Transverse colon (tissue), 4 donors: ENCODE measurements at regions of chr15 and their contacts with region 1.

Region 1: DNA sequence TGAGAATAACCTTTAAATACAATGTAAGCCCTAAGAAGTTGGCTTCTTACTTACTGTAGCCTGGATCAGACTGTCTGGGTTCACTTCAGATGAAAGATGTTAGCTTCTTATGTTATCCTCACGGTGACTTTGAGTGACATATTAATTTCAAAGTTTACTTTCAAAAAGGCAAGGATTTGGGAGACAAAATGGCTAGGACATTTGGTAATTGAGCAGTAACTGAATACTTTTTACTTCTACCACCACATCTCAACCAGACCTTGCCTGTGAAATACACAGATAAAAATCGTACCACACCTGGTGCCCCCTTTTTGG is 36.0 kb upstream of the BNIP2 start:
- DNase-seq: no peak
- H3K4me3 ChIP-seq: no peak overlapping the region
- H3K27ac ChIP-seq: no peak overlapping the region
- H3K4me1 ChIP-seq: no peaks in the 10 kb centered on the region
- H3K27me3 ChIP-seq: peaks cover 13% of the 10 kb centered on the region
- CTCF ChIP-seq: no peak
- EP300 ChIP-seq: no peak
- POLR2A ChIP-seq: no peak

Region 2: DNA sequence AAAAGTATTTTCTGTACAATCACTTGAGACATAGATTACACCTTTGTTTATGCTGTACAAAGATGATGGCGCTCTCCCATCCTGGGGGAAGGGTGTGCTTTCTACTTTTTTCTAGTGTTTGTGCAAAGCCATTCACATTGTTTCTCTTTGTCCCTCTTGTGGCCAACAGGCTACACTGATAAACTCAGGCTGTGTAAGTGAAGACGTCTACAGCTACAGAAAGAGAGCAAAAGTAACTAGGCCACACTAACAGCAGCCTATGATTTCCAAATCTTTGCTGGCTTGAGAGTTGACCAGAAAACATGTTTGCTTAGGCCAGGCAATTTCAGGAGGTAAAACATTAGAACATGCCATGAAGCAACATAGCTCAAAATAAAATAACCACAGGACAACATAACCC is 354.1 kb after region 1 on chr15:
- in situ Hi-C with region 1: no loop called
- intact Hi-C with region 1: no loop called
- DNase-seq: no peak
- H3K4me3 ChIP-seq: no peak overlapping the region
- H3K27ac ChIP-seq: no peak overlapping the region
- H3K4me1 ChIP-seq: no peaks in the 10 kb centered on the region
- H3K27me3 ChIP-seq: peaks cover 3% of the 10 kb centered on the region
- CTCF ChIP-seq: no peak
- EP300 ChIP-seq: no peak
- POLR2A ChIP-seq: no peak

Region 3: DNA sequence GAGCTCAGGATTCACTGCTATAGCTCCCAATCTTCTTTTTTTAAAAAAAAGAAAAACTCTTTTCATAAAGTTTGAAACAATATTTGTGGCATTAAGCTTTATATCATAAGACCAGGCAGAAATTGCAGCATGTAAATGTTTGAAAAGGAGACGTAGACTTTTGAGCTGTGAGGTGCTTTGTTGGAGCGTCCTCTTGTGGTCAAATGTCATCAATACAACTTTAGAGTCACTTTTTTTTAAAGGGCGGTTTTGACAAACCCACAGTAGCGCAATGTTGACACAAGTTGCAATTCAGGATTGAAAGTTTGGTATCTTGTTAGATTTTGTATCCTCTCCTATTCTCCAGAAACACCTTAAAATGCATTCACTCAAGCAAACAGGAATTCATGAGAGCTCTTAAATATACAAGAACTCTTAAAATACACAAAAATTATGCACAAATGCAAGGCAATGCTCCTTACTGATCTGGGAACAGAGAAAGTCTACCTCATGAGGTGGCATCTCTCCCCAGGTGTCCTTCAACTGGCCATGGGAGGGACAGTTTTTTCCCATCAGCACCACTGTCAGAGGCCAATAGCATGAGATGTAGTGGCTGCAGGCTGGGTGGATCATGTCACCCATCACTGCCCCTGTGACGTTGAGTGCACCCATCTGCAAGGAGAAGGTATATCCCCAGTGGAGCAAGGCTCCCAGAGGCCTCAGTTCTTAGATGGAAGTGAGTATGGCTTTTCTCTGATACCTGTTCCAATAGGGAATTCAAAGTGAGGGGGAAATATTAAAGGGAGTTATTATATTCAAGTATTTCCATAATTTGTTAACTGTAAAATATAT is 601.9 kb after region 1 on chr15:
- in situ Hi-C with region 1: loop called in 2 of 4 experiments (anchors 10 kb)
- intact Hi-C with region 1: no loop called
- DNase-seq: no peak
- H3K4me3 ChIP-seq: no peak overlapping the region
- H3K27ac ChIP-seq: no peak overlapping the region
- H3K4me1 ChIP-seq: no peaks in the 10 kb centered on the region
- H3K27me3 ChIP-seq: peaks cover 71% of the 10 kb centered on the region
- CTCF ChIP-seq: peak; percentile 74 to 84 (median 79)
- EP300 ChIP-seq: no peak
- POLR2A ChIP-seq: no peak